ENCODE measurements at regions of chr1 and their contacts with region 1.

Region 1: GRCh38 chr1:91791103-91791502 is 94.8 kb downstream of the TGFBR3 start:
- DNase-seq: peak in 2 of 9 experiments; percentile 25 to 37
- ATAC-seq: peak; percentile 34
- H3K4me3 ChIP-seq: no peak overlapping the region
- H3K4me3 Mint-ChIP-seq: no peak overlapping the region
- H3K27ac ChIP-seq: peak overlapping the region in 1 of 2 experiments; percentile 58
- H3K27ac Mint-ChIP-seq: peak overlapping the region; percentile 12
- H3K4me1 ChIP-seq: peaks cover 27% of the 10 kb centered on the region
- H3K4me1 Mint-ChIP-seq: peaks cover 37% of the 10 kb centered on the region
- H3K27me3 ChIP-seq: no peaks in the 10 kb centered on the region
- H3K27me3 Mint-ChIP-seq: no peaks in the 10 kb centered on the region
- CTCF ChIP-seq: no peak

Region 2: GRCh38 chr1:90370686-90371447 is 1420.2 kb before region 1 on chr1:
- CTCF ChIA-PET with region 1: no interaction called
- POLR2A ChIA-PET with region 1: no interaction called
- intact Hi-C with region 1: no loop called
- DNase-seq: no peak
- ATAC-seq: no peak
- H3K4me3 ChIP-seq: no peak overlapping the region
- H3K4me3 Mint-ChIP-seq: no peak overlapping the region
- H3K27ac ChIP-seq: no peak overlapping the region
- H3K27ac Mint-ChIP-seq: no peak overlapping the region
- H3K4me1 ChIP-seq: no peaks in the 10 kb centered on the region
- H3K4me1 Mint-ChIP-seq: no peaks in the 10 kb centered on the region
- H3K27me3 ChIP-seq: no peaks in the 10 kb centered on the region
- H3K27me3 Mint-ChIP-seq: no peaks in the 10 kb centered on the region
- CTCF ChIP-seq: no peak

Region 3: GRCh38 chr1:91725989-91726721 is 64.9 kb before region 1 on chr1:
- CTCF ChIA-PET with region 1: no interaction called
- POLR2A ChIA-PET with region 1: no interaction called
- intact Hi-C with region 1: loop called in 1 of 2 experiments (anchors 5 kb)
- DNase-seq: no peak
- ATAC-seq: no peak
- H3K4me3 ChIP-seq: no peak overlapping the region
- H3K4me3 Mint-ChIP-seq: no peak overlapping the region
- H3K27ac ChIP-seq: no peak overlapping the region
- H3K27ac Mint-ChIP-seq: no peak overlapping the region
- H3K4me1 ChIP-seq: peaks cover 18% of the 10 kb centered on the region
- H3K4me1 Mint-ChIP-seq: peaks cover 17% of the 10 kb centered on the region
- H3K27me3 ChIP-seq: no peaks in the 10 kb centered on the region
- H3K27me3 Mint-ChIP-seq: no peaks in the 10 kb centered on the region
- CTCF ChIP-seq: no peak

Region 4: GRCh38 chr1:91836331-91837040 is 45.4 kb after region 1 on chr1:
- CTCF ChIA-PET with region 1: no interaction called
- POLR2A ChIA-PET with region 1: no interaction called
- intact Hi-C with region 1: no loop called
- DNase-seq: no peak
- ATAC-seq: no peak
- H3K4me3 ChIP-seq: no peak overlapping the region
- H3K4me3 Mint-ChIP-seq: no peak overlapping the region
- H3K27ac ChIP-seq: no peak overlapping the region
- H3K27ac Mint-ChIP-seq: no peak overlapping the region
- H3K4me1 ChIP-seq: peaks cover under 1% of the 10 kb centered on the region
- H3K4me1 Mint-ChIP-seq: peaks cover 4% of the 10 kb centered on the region
- H3K27me3 ChIP-seq: no peaks in the 10 kb centered on the region
- H3K27me3 Mint-ChIP-seq: no peaks in the 10 kb centered on the region
- CTCF ChIP-seq: no peak

Region 5: GRCh38 chr1:91981996-91982609 is 191.0 kb after region 1 on chr1:
- CTCF ChIA-PET with region 1: no interaction called
- POLR2A ChIA-PET with region 1: no interaction called
- intact Hi-C with region 1: no loop called
- DNase-seq: no peak
- ATAC-seq: no peak
- H3K4me3 ChIP-seq: no peak overlapping the region
- H3K4me3 Mint-ChIP-seq: no peak overlapping the region
- H3K27ac ChIP-seq: no peak overlapping the region
- H3K27ac Mint-ChIP-seq: no peak overlapping the region
- H3K4me1 ChIP-seq: no peaks in the 10 kb centered on the region
- H3K4me1 Mint-ChIP-seq: no peaks in the 10 kb centered on the region
- H3K27me3 ChIP-seq: no peaks in the 10 kb centered on the region
- H3K27me3 Mint-ChIP-seq: no peaks in the 10 kb centered on the region
- CTCF ChIP-seq: no peak

Measured in CD8-positive, alpha-beta T cell (primary cell).